ENCODE measurements at regions of chr17 and their contacts with region 1.

Region 1: GRCh38 chr17:4789901-4790704 is 1.3 kb downstream of the GLTPD2 start:
- DNase-seq: peak; percentile 61 to 92 (median 74)
- ATAC-seq: peak; percentile 85
- H3K4me3 ChIP-seq: peak overlapping the region; percentile 65
- H3K4me3 Mint-ChIP-seq: peak overlapping the region; percentile 91
- H3K27ac ChIP-seq: peak overlapping the region; percentile 58 to 74
- H3K27ac Mint-ChIP-seq: peak overlapping the region; percentile 74
- H3K4me1 ChIP-seq: peaks cover 36% of the 10 kb centered on the region
- H3K4me1 Mint-ChIP-seq: peaks cover 24% of the 10 kb centered on the region
- H3K27me3 ChIP-seq: peaks cover 29% of the 10 kb centered on the region in 2 experiments
- H3K27me3 Mint-ChIP-seq: peaks cover 45% of the 10 kb centered on the region
- CTCF ChIP-seq: peak; percentile 81

Region 2: GRCh38 chr17:4665027-4665426 is 125.1 kb before region 1 on chr17:
- CTCF ChIA-PET with region 1: no interaction called
- POLR2A ChIA-PET with region 1: no interaction called
- intact Hi-C with region 1: no loop called
- DNase-seq: no peak
- ATAC-seq: no peak
- H3K4me3 ChIP-seq: no peak overlapping the region
- H3K4me3 Mint-ChIP-seq: no peak overlapping the region
- H3K27ac ChIP-seq: no peak overlapping the region
- H3K27ac Mint-ChIP-seq: no peak overlapping the region
- H3K4me1 ChIP-seq: no peaks in the 10 kb centered on the region
- H3K4me1 Mint-ChIP-seq: no peaks in the 10 kb centered on the region
- H3K27me3 ChIP-seq: no peaks in the 10 kb centered on the region
- H3K27me3 Mint-ChIP-seq: no peaks in the 10 kb centered on the region
- CTCF ChIP-seq: no peak

Region 3: DNA sequence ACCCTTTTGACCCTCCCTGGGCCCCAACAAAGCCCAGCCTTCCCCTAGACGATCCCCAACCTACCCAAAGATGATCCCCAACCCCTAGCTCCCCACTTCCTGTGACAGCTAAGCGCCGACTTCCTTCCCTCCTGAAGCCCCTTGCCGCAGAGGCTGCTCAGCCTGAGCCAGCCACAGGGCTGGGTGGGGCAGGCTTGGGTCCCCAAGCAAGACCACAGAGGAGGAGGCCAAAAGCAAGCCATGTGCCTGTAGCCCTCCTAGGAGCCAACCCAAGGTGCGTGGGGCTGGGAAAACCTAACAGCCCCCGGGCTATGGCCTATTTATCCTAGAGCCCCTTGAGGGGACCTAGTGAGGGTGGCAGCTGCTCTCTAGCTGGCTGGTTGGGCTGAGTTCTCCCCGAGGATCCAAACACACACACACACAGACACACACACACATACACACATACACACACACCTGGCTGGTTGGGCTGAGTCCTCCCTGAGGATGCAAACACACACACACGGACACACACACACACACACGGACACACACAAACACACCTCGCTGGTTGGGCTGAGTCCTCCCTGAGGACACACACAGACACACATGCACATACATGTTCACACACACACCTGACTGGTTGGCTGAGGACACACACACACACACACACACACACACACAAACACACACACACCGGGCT is 74.9 kb before region 1 on chr17:
- CTCF ChIA-PET with region 1: interaction called, 30 read pairs
- POLR2A ChIA-PET with region 1: interaction called, 27 read pairs
- intact Hi-C with region 1: loop called (anchors 1 to 2 kb)
- DNase-seq: peak; percentile 9 to 84 (median 57)
- ATAC-seq: peak; percentile 15
- H3K4me3 ChIP-seq: peak overlapping the region; percentile 51
- H3K4me3 Mint-ChIP-seq: peak overlapping the region; percentile 88
- H3K27ac ChIP-seq: peak overlapping the region; percentile 66 to 81
- H3K27ac Mint-ChIP-seq: peak overlapping the region; percentile 95
- H3K4me1 ChIP-seq: peaks cover 68% of the 10 kb centered on the region
- H3K4me1 Mint-ChIP-seq: peaks cover 50% of the 10 kb centered on the region
- H3K27me3 ChIP-seq: no peaks in the 10 kb centered on the region
- H3K27me3 Mint-ChIP-seq: no peaks in the 10 kb centered on the region
- CTCF ChIP-seq: no peak

Region 4: DNA sequence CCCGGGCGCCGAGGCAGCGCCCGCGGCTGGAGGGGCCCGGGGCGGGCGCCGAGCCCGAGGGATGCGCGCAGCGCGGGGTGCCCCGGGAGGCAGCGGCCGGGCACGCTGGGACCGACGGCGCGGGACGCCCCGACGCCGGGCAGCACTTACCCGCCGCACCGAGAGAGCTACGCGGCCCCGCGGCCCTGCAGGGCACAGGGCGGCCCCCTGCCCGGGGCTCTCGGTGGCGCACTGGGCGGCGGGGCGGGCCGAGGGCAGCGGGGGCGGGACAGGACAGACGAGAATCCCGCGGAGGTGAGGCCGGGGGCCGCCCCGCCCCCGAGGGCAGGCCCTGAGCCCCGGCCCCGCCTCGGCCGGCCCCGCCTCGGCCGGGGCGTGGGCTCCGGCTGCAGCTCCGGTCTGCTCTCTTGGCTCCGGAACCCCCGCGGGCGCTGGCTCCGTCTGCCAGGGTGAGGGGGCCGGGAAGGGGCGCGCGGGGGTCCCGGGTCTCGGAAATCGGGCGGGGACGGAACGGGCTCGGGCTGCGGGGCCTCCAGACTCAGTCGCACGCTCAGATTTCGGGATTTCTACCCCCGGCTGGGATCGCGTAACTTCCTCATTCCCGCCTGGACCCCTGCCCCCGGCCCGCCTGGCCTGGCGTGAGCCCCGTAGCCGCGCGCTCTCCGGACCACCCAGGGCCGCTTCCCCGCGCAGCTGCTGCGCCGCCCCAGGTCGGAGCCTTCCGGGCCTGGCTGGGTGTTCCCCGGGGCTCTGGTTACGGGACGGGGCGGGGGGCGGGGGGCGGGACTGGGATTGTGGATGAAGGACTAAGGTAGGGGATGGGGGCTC is 16.9 kb after region 1 on chr17 and contains the start of gene PLD2:
- CTCF ChIA-PET with region 1: interaction called, 13 read pairs
- POLR2A ChIA-PET with region 1: interaction called, 18 read pairs
- intact Hi-C with region 1: no loop called
- DNase-seq: peak; percentile 68 to 94 (median 84)
- ATAC-seq: peak; percentile 98
- H3K4me3 ChIP-seq: peak within 1 kb of the TSS; percentile 57
- H3K4me3 Mint-ChIP-seq: peak within 1 kb of the TSS; percentile 87
- H3K27ac ChIP-seq: no peak within 1 kb of the TSS
- H3K27ac Mint-ChIP-seq: no peak within 1 kb of the TSS
- H3K4me1 ChIP-seq: peaks cover 12% of the 10 kb centered on the region
- H3K4me1 Mint-ChIP-seq: peaks cover 21% of the 10 kb centered on the region
- H3K27me3 ChIP-seq: no peaks in the 10 kb centered on the region
- H3K27me3 Mint-ChIP-seq: no peaks in the 10 kb centered on the region
- CTCF ChIP-seq: no peak
- total RNA-seq, gene PLD2: 10.2 to 10.7 TPM

Region 5: GRCh38 chr17:4846635-4847390 is 56.7 kb after region 1 on chr17:
- CTCF ChIA-PET with region 1: no interaction called
- POLR2A ChIA-PET with region 1: no interaction called
- intact Hi-C with region 1: no loop called
- DNase-seq: no peak
- ATAC-seq: no peak
- H3K4me3 ChIP-seq: no peak overlapping the region
- H3K4me3 Mint-ChIP-seq: no peak overlapping the region
- H3K27ac ChIP-seq: no peak overlapping the region
- H3K27ac Mint-ChIP-seq: no peak overlapping the region
- H3K4me1 ChIP-seq: peaks cover 15% of the 10 kb centered on the region
- H3K4me1 Mint-ChIP-seq: peaks cover 60% of the 10 kb centered on the region
- H3K27me3 ChIP-seq: no peaks in the 10 kb centered on the region
- H3K27me3 Mint-ChIP-seq: no peaks in the 10 kb centered on the region
- CTCF ChIP-seq: no peak

Region 6: GRCh38 chr17:4881761-4882555 is 91.9 kb after region 1 on chr17:
- CTCF ChIA-PET with region 1: interaction called, 16 read pairs
- POLR2A ChIA-PET with region 1: no interaction called
- intact Hi-C with region 1: loop called in 1 of 2 experiments (anchors 2 kb)
- DNase-seq: peak; percentile 59 to 83 (median 69)
- ATAC-seq: peak; percentile 97
- H3K4me3 ChIP-seq: no peak overlapping the region
- H3K4me3 Mint-ChIP-seq: no peak overlapping the region
- H3K27ac ChIP-seq: no peak overlapping the region
- H3K27ac Mint-ChIP-seq: no peak overlapping the region
- H3K4me1 ChIP-seq: peaks cover 2% of the 10 kb centered on the region
- H3K4me1 Mint-ChIP-seq: no peaks in the 10 kb centered on the region
- H3K27me3 ChIP-seq: no peaks in the 10 kb centered on the region
- H3K27me3 Mint-ChIP-seq: no peaks in the 10 kb centered on the region
- CTCF ChIP-seq: peak; percentile 90

Region 7: GRCh38 chr17:4903051-4903818 is 113.1 kb after region 1 on chr17 and contains the start of gene CHRNE:
- CTCF ChIA-PET with region 1: interaction called, 4 read pairs
- POLR2A ChIA-PET with region 1: interaction called, 5 read pairs
- intact Hi-C with region 1: loop called in 1 of 2 experiments (anchors 5 kb)
- DNase-seq: peak; percentile 55 to 91 (median 70)
- ATAC-seq: peak; percentile 33
- H3K4me3 ChIP-seq: no peak within 1 kb of the TSS
- H3K4me3 Mint-ChIP-seq: peak within 1 kb of the TSS; percentile 76
- H3K27ac ChIP-seq: no peak within 1 kb of the TSS
- H3K27ac Mint-ChIP-seq: peak within 1 kb of the TSS; percentile 94
- H3K4me1 ChIP-seq: peaks cover 54% of the 10 kb centered on the region
- H3K4me1 Mint-ChIP-seq: peaks cover 35% of the 10 kb centered on the region
- H3K27me3 ChIP-seq: no peaks in the 10 kb centered on the region
- H3K27me3 Mint-ChIP-seq: peaks cover 10% of the 10 kb centered on the region
- CTCF ChIP-seq: peak; percentile 89
- total RNA-seq, gene CHRNE: 3.2 to 3.7 TPM